Adrenal gland (tissue), 19 donors: ENCODE measurements at regions of chr4 and their contacts with region 1.

Region 1: GRCh38 chr4:110201502-110201901 is 3.1 kb upstream of the ELOVL6 start:
- DNase-seq: no peak
- H3K4me3 ChIP-seq: no peak overlapping the region
- H3K27ac ChIP-seq: no peak overlapping the region
- H3K4me1 ChIP-seq: peaks cover 0 to 7% of the 10 kb centered on the region in 2 donors
- H3K27me3 ChIP-seq: no peaks in the 10 kb centered on the region
- CTCF ChIP-seq: no peak
- POLR2A ChIP-seq: no peak

Region 2: GRCh38 chr4:109497511-109497910 is 704.0 kb before region 1 on chr4:
- intact Hi-C with region 1: loop called in 1 of 2 experiments (anchors 10 kb)
- DNase-seq: no peak
- H3K4me3 ChIP-seq: no peak overlapping the region
- H3K27ac ChIP-seq: no peak overlapping the region
- H3K4me1 ChIP-seq: peaks cover 0 to under 1% of the 10 kb centered on the region in 2 donors
- H3K27me3 ChIP-seq: no peaks in the 10 kb centered on the region
- CTCF ChIP-seq: no peak
- POLR2A ChIP-seq: no peak